Activated CD8-positive, alpha-beta T cell treated with anti-CD3 and anti-CD28 coated beads for 36 hours (primary cell): ENCODE measurements at regions of chrX and their contacts with region 1.

Region 1: GRCh38 chrX:71532753-71533425 is at the start of gene OGT:
- DNase-seq: peak; percentile 96
- ATAC-seq: peak; percentile 74
- H3K4me3 Mint-ChIP-seq: peak within 1 kb of the TSS; percentile 98
- H3K27ac Mint-ChIP-seq: peak within 1 kb of the TSS; percentile 99
- H3K4me1 Mint-ChIP-seq: peaks cover 15% of the 10 kb centered on the region
- H3K27me3 Mint-ChIP-seq: no peaks in the 10 kb centered on the region
- CTCF ChIP-seq: no peak
- total RNA-seq, gene OGT: 354 to 358 TPM

Region 2: GRCh38 chrX:71103110-71103983 is 429.5 kb before region 1 on chrX:
- CTCF ChIA-PET with region 1: no interaction called
- POLR2A ChIA-PET with region 1: no interaction called
- intact Hi-C with region 1: loop called (anchors 10 kb)
- DNase-seq: peak; percentile 80
- ATAC-seq: peak; percentile 50
- H3K4me3 Mint-ChIP-seq: peak overlapping the region; percentile 77
- H3K27ac Mint-ChIP-seq: peak overlapping the region; percentile 87
- H3K4me1 Mint-ChIP-seq: peaks cover 77% of the 10 kb centered on the region
- H3K27me3 Mint-ChIP-seq: no peaks in the 10 kb centered on the region
- CTCF ChIP-seq: no peak

Region 3: DNA sequence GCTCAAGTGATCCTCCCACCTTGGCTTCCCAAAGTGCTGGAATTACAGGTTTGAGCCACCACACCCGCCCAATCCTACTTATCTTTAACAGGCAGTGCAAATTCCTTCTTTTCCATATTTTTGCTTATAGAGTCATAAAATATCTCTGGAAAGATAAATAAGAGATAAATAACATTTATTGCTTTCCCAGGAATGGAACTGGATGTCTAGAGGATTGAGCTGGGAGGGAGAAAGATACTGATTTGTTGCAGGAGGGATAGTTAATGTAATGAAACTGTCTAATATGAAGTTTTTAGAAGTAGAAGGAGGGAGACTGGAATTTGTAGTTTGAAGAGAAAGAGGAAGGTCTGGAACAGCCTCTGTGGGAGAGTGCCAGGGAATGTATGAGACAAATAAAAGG is 211.2 kb before region 1 on chrX:
- CTCF ChIA-PET with region 1: no interaction called
- POLR2A ChIA-PET with region 1: no interaction called
- intact Hi-C with region 1: no loop called
- DNase-seq: no peak
- ATAC-seq: no peak
- H3K4me3 Mint-ChIP-seq: no peak overlapping the region
- H3K27ac Mint-ChIP-seq: no peak overlapping the region
- H3K4me1 Mint-ChIP-seq: no peaks in the 10 kb centered on the region
- H3K27me3 Mint-ChIP-seq: no peaks in the 10 kb centered on the region
- CTCF ChIP-seq: no peak

Region 4: GRCh38 chrX:71365876-71366673 is 166.8 kb before region 1 on chrX and contains the start of gene TAF1:
- CTCF ChIA-PET with region 1: no interaction called
- POLR2A ChIA-PET with region 1: interaction called, 15 read pairs
- intact Hi-C with region 1: loop called (anchors 5 kb)
- DNase-seq: peak; percentile 96
- ATAC-seq: peak; percentile 90
- H3K4me3 Mint-ChIP-seq: peak within 1 kb of the TSS; percentile 94
- H3K27ac Mint-ChIP-seq: peak within 1 kb of the TSS; percentile 98
- H3K4me1 Mint-ChIP-seq: peaks cover 18% of the 10 kb centered on the region
- H3K27me3 Mint-ChIP-seq: no peaks in the 10 kb centered on the region
- CTCF ChIP-seq: no peak
- total RNA-seq, gene TAF1: 26.8 to 30.9 TPM

Region 5: GRCh38 chrX:71492231-71493065 is 40.4 kb before region 1 on chrX:
- CTCF ChIA-PET with region 1: no interaction called
- POLR2A ChIA-PET with region 1: interaction called, 21 read pairs
- intact Hi-C with region 1: no loop called
- DNase-seq: peak; percentile 66
- ATAC-seq: peak; percentile 75
- H3K4me3 Mint-ChIP-seq: peak overlapping the region; percentile 76
- H3K27ac Mint-ChIP-seq: peak overlapping the region; percentile 72
- H3K4me1 Mint-ChIP-seq: peaks cover 12% of the 10 kb centered on the region
- H3K27me3 Mint-ChIP-seq: no peaks in the 10 kb centered on the region
- CTCF ChIP-seq: no peak

Region 6: GRCh38 chrX:71514367-71515038 is 18.4 kb before region 1 on chrX:
- CTCF ChIA-PET with region 1: interaction called, 4 read pairs
- POLR2A ChIA-PET with region 1: interaction called, 11 read pairs
- intact Hi-C with region 1: no loop called
- DNase-seq: peak; percentile 64
- ATAC-seq: peak; percentile 99
- H3K4me3 Mint-ChIP-seq: peak overlapping the region; percentile 39
- H3K27ac Mint-ChIP-seq: peak overlapping the region; percentile 66
- H3K4me1 Mint-ChIP-seq: peaks cover 27% of the 10 kb centered on the region
- H3K27me3 Mint-ChIP-seq: no peaks in the 10 kb centered on the region
- CTCF ChIP-seq: no peak

Region 7: GRCh38 chrX:71622576-71623450 is 89.9 kb after region 1 on chrX:
- CTCF ChIA-PET with region 1: interaction called, 4 read pairs
- POLR2A ChIA-PET with region 1: interaction called, 23 read pairs
- intact Hi-C with region 1: no loop called
- DNase-seq: peak; percentile 88
- ATAC-seq: peak; percentile 63
- H3K4me3 Mint-ChIP-seq: peak overlapping the region; percentile 67
- H3K27ac Mint-ChIP-seq: peak overlapping the region; percentile 89
- H3K4me1 Mint-ChIP-seq: peaks cover 56% of the 10 kb centered on the region
- H3K27me3 Mint-ChIP-seq: no peaks in the 10 kb centered on the region
- CTCF ChIP-seq: no peak

Region 8: DNA sequence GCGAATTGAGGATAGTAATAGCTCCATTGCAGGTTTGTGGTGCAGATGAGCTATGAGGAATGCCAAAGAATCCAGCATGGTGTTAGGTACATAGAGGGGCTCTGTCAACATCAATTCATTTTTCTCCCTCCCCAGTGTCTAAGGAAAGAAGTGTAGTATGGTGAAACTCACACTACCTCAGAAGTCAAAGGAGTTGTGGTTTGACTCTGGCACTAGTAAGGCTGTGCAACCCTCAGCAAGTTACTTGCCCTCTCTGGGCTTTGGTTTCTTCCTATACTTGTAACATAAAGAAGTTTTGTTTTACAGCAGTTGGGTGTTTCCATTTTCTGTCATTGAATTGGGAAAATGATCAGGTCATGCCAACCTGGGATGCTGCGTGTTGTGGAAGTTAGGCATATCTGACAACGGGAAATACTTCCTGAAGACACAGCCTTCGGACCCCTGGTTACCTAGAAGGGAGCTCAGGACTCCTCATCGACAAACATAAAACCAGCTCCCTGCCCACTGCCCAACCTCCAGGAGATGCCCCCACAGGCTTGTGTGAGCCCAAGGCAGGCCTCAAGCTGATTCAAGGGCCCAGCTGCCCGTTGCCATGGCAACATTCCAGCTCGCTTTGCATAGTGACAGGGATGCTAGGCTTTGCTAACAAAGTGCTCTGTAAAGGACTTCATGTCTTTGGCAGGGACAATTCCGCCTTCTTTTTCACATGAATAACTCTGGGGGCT is 527.5 kb after region 1 on chrX:
- CTCF ChIA-PET with region 1: no interaction called
- POLR2A ChIA-PET with region 1: no interaction called
- intact Hi-C with region 1: no loop called
- DNase-seq: no peak
- ATAC-seq: no peak
- H3K4me3 Mint-ChIP-seq: no peak overlapping the region
- H3K27ac Mint-ChIP-seq: no peak overlapping the region
- H3K4me1 Mint-ChIP-seq: no peaks in the 10 kb centered on the region
- H3K27me3 Mint-ChIP-seq: peaks cover 8% of the 10 kb centered on the region
- CTCF ChIP-seq: no peak